ENCODE measurements at regions of chr3 and their contacts with region 1.

Region 1: DNA sequence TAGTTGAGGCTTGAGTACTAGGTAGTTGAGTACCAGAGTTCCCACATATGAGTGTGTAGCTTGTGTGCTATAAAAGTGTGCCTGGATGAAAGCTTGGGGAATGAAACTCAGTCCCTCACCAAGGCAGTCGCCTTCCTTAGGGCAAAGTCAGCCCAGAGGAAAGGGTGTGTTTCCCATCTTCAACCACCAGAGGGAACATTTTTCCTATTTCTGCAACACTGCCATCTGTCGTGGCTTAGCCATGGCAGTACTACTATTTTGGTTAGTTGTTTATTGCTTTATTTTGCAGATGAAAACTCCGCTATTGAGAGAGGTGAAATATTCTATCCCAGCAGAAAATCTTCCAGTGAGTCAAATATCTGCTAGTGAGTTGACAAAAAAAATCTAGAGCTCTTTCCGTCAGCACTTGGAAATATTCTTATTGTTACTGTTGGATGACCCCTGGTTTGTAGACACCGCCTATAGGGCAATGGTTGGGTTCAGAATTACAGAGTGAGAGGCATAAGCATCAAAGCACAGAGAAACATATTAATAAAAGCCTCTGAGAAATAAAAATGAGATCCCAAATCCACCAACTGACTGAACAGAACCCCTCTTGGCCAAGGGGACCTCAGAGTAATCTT is 239.9 kb downstream of the CPNE4 start:
- DNase-seq: peak in 5 of 9 donors; percentile 21 to 43 (median 34)
- ATAC-seq: peak; percentile 77
- H3K4me3 ChIP-seq: no peak overlapping the region
- H3K4me3 Mint-ChIP-seq: no peak overlapping the region
- H3K27ac ChIP-seq: no peak overlapping the region
- H3K27ac Mint-ChIP-seq: peak overlapping the region in 1 of 9 donors; percentile 29
- H3K4me1 ChIP-seq: no peaks in the 10 kb centered on the region
- H3K4me1 Mint-ChIP-seq: peaks cover 0 to 15% (median 9%) of the 10 kb centered on the region in 7 donors
- H3K27me3 ChIP-seq: no peaks in the 10 kb centered on the region
- H3K27me3 Mint-ChIP-seq: peaks cover 4 to 36% (median 16%) of the 10 kb centered on the region in 5 donors

Region 2: DNA sequence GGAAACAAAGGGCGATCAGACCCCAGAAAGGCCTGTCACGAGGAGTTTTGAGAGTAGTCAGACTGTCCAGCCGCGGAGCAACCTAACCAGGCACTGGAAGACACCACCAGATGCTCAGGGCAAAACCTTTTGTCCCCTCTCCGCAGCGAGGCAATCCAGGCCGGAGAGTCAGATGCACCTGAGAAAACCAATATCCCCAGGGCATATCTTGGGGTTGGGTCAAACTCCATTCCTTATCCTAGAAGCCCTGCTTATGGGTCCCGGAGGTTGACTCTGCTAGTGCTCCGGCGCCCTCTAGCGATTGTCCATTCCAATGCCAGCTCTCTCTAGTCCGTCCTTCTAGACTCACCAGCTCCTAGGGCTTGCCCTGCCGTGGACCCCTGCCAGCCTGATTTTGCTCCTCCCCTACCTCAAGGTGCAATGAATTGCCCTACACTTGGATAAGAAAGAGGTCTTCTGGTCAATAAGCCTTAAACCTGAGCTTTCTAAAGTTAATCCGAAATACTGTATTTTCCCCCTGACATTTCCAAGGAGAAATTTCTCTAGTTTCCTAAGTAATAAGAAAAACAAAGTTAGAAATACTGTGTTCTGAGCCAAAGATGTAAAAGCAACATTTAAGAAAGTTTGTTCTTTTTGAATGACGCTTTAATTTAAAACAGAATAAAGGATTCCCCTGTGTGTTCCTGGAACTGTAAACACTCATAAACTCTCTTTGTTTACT is 234.5 kb after region 1 on chr3:
- CTCF ChIA-PET with region 1: no interaction called
- POLR2A ChIA-PET with region 1: no interaction called
- intact Hi-C with region 1: loop called (anchors 1 to 5 kb)
- DNase-seq: peak in 7 of 9 donors; percentile 13 to 54 (median 33)
- ATAC-seq: peak; percentile 78
- H3K4me3 ChIP-seq: no peak overlapping the region
- H3K4me3 Mint-ChIP-seq: no peak overlapping the region
- H3K27ac ChIP-seq: no peak overlapping the region
- H3K27ac Mint-ChIP-seq: no peak overlapping the region
- H3K4me1 ChIP-seq: no peaks in the 10 kb centered on the region
- H3K4me1 Mint-ChIP-seq: peaks cover 0 to 9% (median 3%) of the 10 kb centered on the region in 7 donors
- H3K27me3 ChIP-seq: peaks cover under 1 to 6% of the 10 kb centered on the region in 2 donors
- H3K27me3 Mint-ChIP-seq: peaks cover 40 to 61% (median 54%) of the 10 kb centered on the region in 5 donors

Region 3: GRCh38 chr3:132180337-132180791 is 385.5 kb after region 1 on chr3:
- CTCF ChIA-PET with region 1: no interaction called
- POLR2A ChIA-PET with region 1: no interaction called
- intact Hi-C with region 1: loop called in 1 of 2 experiments (anchors 5 kb)
- DNase-seq: peak in 6 of 9 donors; percentile 8 to 33 (median 18)
- ATAC-seq: peak; percentile 58
- H3K4me3 ChIP-seq: no peak overlapping the region
- H3K4me3 Mint-ChIP-seq: peak overlapping the region in 2 of 10 donors; percentile 3 to 27
- H3K27ac ChIP-seq: no peak overlapping the region
- H3K27ac Mint-ChIP-seq: no peak overlapping the region
- H3K4me1 ChIP-seq: no peaks in the 10 kb centered on the region
- H3K4me1 Mint-ChIP-seq: peaks cover 0 to 6% (median 4%) of the 10 kb centered on the region in 7 donors
- H3K27me3 ChIP-seq: no peaks in the 10 kb centered on the region
- H3K27me3 Mint-ChIP-seq: peaks cover 2 to 20% (median 7%) of the 10 kb centered on the region in 5 donors

Region 4: DNA sequence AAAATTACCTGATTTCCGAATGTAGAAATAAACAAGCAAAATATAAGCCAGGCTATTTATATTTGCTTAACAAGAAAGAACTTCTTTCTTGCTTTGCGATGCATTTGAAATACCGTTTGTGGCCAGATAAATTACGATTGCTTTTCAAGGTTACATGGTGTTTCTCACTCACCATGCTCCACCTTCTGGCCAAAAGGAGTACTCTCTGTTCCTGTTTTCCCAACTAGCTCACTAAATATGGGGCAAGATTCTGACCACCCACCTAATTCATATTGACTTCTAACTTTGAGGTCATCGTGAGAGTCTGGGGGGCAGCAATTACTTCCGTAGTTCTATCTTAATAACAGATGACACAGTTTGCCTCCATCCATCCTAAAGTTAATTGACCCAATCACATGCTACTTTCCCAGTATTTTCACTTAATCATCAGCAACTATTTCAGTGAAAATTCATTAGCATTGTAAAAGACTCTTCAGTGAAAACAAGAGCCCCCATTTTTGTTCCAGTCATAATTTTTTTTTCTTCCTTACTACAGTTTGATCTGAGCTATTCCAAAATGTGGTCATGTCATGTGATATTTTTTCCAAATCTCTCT is 548.2 kb after region 1 on chr3:
- CTCF ChIA-PET with region 1: interaction called, 4 read pairs
- POLR2A ChIA-PET with region 1: no interaction called
- intact Hi-C with region 1: loop called in 1 of 2 experiments (anchors 2 kb)
- DNase-seq: peak in 5 of 9 donors; percentile 12 to 29 (median 21)
- ATAC-seq: peak; percentile 50
- H3K4me3 ChIP-seq: no peak overlapping the region
- H3K4me3 Mint-ChIP-seq: peak overlapping the region in 3 of 10 donors; percentile 19 to 32 (median 27)
- H3K27ac ChIP-seq: no peak overlapping the region
- H3K27ac Mint-ChIP-seq: no peak overlapping the region
- H3K4me1 ChIP-seq: no peaks in the 10 kb centered on the region
- H3K4me1 Mint-ChIP-seq: peaks cover 0 to 11% (median 0%) of the 10 kb centered on the region in 7 donors
- H3K27me3 ChIP-seq: no peaks in the 10 kb centered on the region
- H3K27me3 Mint-ChIP-seq: peaks cover 0 to 22% (median 0%) of the 10 kb centered on the region in 5 donors

Region 5: GRCh38 chr3:132867956-132868355 is 1073.1 kb after region 1 on chr3:
- CTCF ChIA-PET with region 1: no interaction called
- POLR2A ChIA-PET with region 1: no interaction called
- intact Hi-C with region 1: no loop called
- DNase-seq: no peak
- ATAC-seq: no peak
- H3K4me3 ChIP-seq: no peak overlapping the region
- H3K4me3 Mint-ChIP-seq: no peak overlapping the region
- H3K27ac ChIP-seq: no peak overlapping the region
- H3K27ac Mint-ChIP-seq: no peak overlapping the region
- H3K4me1 ChIP-seq: no peaks in the 10 kb centered on the region
- H3K4me1 Mint-ChIP-seq: no peaks in the 10 kb centered on the region
- H3K27me3 ChIP-seq: no peaks in the 10 kb centered on the region
- H3K27me3 Mint-ChIP-seq: peaks cover 5 to 26% (median 11%) of the 10 kb centered on the region in 5 donors

Measured in naive thymus-derived CD4-positive, alpha-beta T cell (primary cell).